Activated CD8-positive, alpha-beta memory T cell treated with anti-CD3 and anti-CD28 coated beads, Interleukin-2, amount 10 ng/mL, durations not matched to agents 7 days and 5 days (primary cell): ENCODE measurements at regions of chr12 and their contacts with region 1.

Region 1: DNA sequence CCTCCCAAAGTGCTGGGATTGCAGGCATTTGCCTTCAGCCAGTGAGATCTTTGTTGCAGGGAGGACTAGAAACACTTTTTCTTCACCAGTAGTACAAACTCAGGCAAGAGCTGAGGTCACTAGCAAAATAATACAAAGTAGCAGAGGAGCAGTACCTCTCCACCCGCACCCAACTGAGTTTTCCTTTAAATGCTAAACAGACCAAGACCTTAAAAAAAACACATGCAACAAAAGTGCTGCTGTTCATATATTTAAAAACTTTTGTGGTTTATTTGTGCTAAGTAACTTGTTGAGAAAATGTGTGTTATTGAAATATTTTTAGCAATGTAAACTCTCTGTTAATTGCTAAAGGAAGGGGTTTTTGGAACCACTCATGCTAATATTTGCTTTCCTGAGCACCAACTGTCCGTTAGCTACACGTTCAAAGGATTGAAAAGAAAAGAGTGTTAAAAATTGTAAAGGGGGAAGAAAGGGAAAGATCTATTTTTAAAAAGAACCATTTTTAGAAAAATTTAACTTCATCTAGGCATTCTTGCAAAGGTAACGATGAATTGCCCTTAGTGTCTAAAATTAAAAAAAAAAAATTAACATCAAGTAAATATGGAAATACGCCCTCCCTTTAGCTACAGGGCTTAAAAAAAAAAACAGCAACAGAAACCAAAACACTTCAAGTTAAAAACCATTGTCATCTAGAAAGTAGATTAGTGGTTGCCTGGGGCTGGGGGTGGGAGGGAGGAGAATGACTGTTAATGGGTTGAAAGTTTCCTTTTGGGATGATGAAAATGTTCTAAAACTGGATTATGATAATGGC is 114.0 kb upstream of the KRAS start:
- DNase-seq: peak; percentile 82
- ATAC-seq: peak; percentile 91
- H3K4me3 Mint-ChIP-seq: peak overlapping the region; percentile 67
- H3K27ac Mint-ChIP-seq: peak overlapping the region; percentile 89
- H3K4me1 Mint-ChIP-seq: peaks cover 25% of the 10 kb centered on the region
- H3K27me3 Mint-ChIP-seq: no peaks in the 10 kb centered on the region

Region 2: DNA sequence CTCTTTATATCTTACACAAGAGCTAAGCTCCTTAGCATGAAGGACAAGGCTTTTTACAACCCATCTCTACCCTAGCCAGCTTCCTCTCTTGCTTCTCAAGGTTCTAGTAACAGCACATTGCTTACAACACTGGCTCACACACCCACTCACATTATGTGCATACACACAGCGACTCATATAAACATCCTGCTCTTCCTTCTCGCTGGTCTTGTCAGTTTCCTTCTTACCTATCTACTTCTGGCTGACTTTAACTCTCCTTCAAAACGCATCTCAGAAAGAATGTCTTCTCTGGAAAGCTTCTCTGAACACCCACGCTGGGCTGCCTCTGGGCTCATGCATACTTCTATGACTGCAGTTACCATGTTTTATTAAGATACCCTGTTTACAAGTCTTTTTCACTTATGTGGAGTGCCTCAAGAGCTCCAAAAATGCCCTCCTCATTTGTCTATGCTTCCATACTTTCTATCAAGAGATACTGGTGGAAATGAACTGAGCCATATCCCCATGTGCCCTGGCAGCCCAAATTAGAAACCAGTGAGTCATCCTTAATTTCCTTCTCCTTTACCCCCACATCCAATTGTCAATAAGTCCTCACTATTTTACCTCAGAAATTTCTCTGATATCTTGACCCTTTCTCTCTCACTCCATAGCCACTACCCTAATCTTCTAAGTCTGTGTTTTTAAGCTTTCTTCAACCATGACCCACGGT is 12.9 kb after region 1 on chr12:
- CTCF ChIA-PET with region 1: interaction called, 16 read pairs
- DNase-seq: peak; percentile 69
- ATAC-seq: peak; percentile 85
- H3K4me3 Mint-ChIP-seq: peak overlapping the region; percentile 5
- H3K27ac Mint-ChIP-seq: peak overlapping the region; percentile 83
- H3K4me1 Mint-ChIP-seq: peaks cover 70% of the 10 kb centered on the region
- H3K27me3 Mint-ChIP-seq: no peaks in the 10 kb centered on the region